ENCODE measurements at regions of chr12 and their contacts with region 1.

Region 1: DNA sequence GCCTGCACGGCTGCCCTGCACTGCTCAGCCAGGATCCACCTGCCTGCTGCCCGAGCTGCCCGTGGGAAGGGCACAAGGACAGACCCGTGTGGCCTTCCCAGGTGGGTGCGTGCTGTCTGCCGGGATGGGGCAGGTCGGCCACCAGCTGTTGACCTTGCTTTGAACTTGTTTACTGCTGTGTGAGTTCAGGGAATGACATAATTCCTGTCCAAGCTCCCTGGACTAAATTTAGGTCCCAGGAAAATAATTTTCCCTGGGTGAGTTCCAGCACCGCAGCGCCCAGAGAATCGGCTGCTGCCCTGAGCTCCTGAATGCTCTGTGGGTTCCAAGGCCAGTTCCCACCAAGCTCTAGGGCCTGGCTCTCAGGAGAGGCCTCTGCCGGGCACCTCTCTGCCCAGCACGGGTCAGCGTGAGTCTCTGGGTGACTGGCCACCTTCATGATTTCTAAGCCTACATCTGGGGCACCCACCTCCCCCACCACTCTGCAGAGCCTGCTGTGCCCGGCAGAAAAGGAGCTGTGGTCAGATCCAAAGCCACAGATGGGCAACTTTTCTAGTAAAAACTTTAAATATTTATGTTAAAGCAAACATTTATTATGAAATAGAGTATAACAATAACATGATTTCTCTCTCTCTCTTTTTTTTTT is 27.2 kb upstream of the MLXIP start:
- DNase-seq: no peak
- ATAC-seq: peak; percentile 6

Region 2: GRCh38 chr12:122123051-122123760 is 71.9 kb after region 1 on chr12:
- intact Hi-C with region 1: loop called (anchors 2 to 5 kb)
- DNase-seq: peak; percentile 71 to 80
- ATAC-seq: peak; percentile 61

Measured in left colon (tissue), 2 donors.